ENCODE measurements at regions of chr10 and their contacts with region 1.

Region 1: GRCh38 chr10:67779465-67780203 is 58.4 kb downstream of the DNAJC12 start:
- DNase-seq: peak in 1 of 2 donors; percentile 78
- ATAC-seq: peak; percentile 72 to 94 (median 86)
- H3K4me3 ChIP-seq: no peak overlapping the region
- H3K27ac ChIP-seq: no peak overlapping the region
- H3K4me1 ChIP-seq: peaks cover 0 to 18% (median 2%) of the 10 kb centered on the region in 9 donors
- H3K27me3 ChIP-seq: no peaks in the 10 kb centered on the region
- CTCF ChIP-seq: peak; percentile 76 to 90 (median 85)

Region 2: DNA sequence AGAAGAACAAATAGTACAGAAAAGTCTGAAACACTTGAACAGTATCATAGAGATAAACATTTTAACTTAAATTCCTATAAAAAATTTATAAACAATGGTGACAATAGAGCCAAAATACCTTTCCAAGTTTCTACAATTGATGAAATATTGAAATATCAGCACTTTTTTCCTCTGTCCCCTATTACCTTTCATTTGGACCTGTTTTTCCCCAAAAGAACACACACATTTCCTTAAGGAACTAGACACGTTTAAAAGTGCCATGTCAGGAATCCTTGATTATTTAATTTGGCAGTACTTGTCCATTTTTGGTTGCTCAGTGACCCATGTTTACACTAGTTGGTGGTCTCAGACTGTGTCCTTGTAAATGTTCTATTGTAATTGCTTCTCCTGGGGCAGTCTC is 246.3 kb before region 1 on chr10:
- intact Hi-C with region 1: loop called in 2 of 10 experiments (anchors 5 to 10 kb)
- DNase-seq: no peak
- ATAC-seq: no peak
- H3K4me3 ChIP-seq: no peak overlapping the region
- H3K27ac ChIP-seq: no peak overlapping the region
- H3K4me1 ChIP-seq: peaks cover 0 to under 1% (median 0%) of the 10 kb centered on the region in 9 donors
- H3K27me3 ChIP-seq: no peaks in the 10 kb centered on the region
- CTCF ChIP-seq: no peak

Region 3: DNA sequence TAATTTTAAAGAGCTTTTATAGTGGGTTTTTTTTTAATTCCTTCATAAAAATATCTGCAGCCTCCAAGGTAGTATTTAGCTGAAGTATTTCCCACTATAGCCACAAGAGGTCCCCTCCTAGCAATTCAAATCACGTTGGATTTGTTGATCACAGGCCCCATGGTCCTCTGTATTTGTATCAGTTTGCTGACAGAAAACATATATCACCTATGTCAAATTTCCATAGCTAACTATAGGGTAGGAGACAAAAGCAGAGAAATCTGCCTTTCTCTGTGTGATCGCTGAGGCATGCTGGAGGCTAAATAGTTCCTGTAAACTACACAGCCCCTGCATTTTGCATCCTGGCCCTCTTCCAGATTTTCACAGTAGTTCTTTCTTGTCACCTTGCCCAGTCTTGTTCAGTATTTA is 81.9 kb before region 1 on chr10:
- intact Hi-C with region 1: loop called (anchors 1 to 10 kb)
- DNase-seq: peak in 1 of 2 donors; percentile 10
- ATAC-seq: peak in 6 of 8 donors; percentile 25 to 76 (median 54)
- H3K4me3 ChIP-seq: no peak overlapping the region
- H3K27ac ChIP-seq: peak overlapping the region in 4 of 10 donors; percentile 79 to 93 (median 88)
- H3K4me1 ChIP-seq: peaks cover 0 to 28% (median 10%) of the 10 kb centered on the region in 9 donors
- H3K27me3 ChIP-seq: peaks cover 0 to 19% (median 0%) of the 10 kb centered on the region in 7 donors
- CTCF ChIP-seq: peak; percentile 40 to 79 (median 71)

Region 4: GRCh38 chr10:67735430-67735829 is 44.2 kb before region 1 on chr10:
- intact Hi-C with region 1: no loop called
- DNase-seq: no peak
- ATAC-seq: no peak
- H3K4me3 ChIP-seq: no peak overlapping the region
- H3K27ac ChIP-seq: no peak overlapping the region
- H3K4me1 ChIP-seq: no peaks in the 10 kb centered on the region
- H3K27me3 ChIP-seq: no peaks in the 10 kb centered on the region
- CTCF ChIP-seq: no peak

Measured in heart right ventricle (tissue), 16 donors.